ENCODE measurements at regions of chr11 and their contacts with region 1.

Region 1: GRCh38 chr11:95231127-95231880 is at the start of gene SESN3:
- DNase-seq: peak; percentile 99
- ATAC-seq: peak; percentile 93
- H3K4me3 Mint-ChIP-seq: no peak within 1 kb of the TSS
- H3K27ac Mint-ChIP-seq: peak within 1 kb of the TSS; percentile 84
- H3K4me1 Mint-ChIP-seq: peaks cover 46% of the 10 kb centered on the region
- H3K27me3 Mint-ChIP-seq: no peaks in the 10 kb centered on the region
- total RNA-seq, gene SESN3: 8.4 to 12.3 TPM

Region 2: DNA sequence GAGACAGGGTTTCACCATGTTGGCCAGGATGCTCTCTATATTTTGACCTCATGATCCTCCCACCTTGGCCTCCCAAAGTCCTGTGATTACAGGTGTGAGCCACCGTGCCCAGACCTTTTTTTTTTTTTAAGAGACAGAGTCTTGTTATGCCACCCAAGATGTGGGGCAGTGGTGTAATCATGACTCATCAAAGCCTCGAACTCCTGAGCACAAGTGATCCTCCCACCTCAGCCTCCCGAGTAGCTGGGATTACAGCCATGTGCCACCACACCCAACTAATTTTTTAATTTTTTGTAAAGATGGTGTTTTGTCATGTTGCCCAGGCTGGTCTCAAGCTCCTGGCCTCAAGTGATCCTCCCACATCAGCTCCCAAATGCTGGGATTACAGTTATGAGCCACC is 889.1 kb before region 1 on chr11:
- CTCF ChIA-PET with region 1: no interaction called
- POLR2A ChIA-PET with region 1: no interaction called
- intact Hi-C with region 1: no loop called
- DNase-seq: no peak
- ATAC-seq: no peak
- H3K4me3 Mint-ChIP-seq: no peak overlapping the region
- H3K27ac Mint-ChIP-seq: no peak overlapping the region
- H3K4me1 Mint-ChIP-seq: no peaks in the 10 kb centered on the region
- H3K27me3 Mint-ChIP-seq: peaks cover under 1% of the 10 kb centered on the region

Region 3: GRCh38 chr11:94910779-94911178 is 320.5 kb before region 1 on chr11:
- CTCF ChIA-PET with region 1: no interaction called
- POLR2A ChIA-PET with region 1: no interaction called
- intact Hi-C with region 1: no loop called
- DNase-seq: no peak
- ATAC-seq: no peak
- H3K4me3 Mint-ChIP-seq: no peak overlapping the region
- H3K27ac Mint-ChIP-seq: no peak overlapping the region
- H3K4me1 Mint-ChIP-seq: no peaks in the 10 kb centered on the region
- H3K27me3 Mint-ChIP-seq: no peaks in the 10 kb centered on the region

Region 4: GRCh38 chr11:94973099-94973968 is 258.0 kb before region 1 on chr11 and contains the starts of genes CWC15 and KDM4D:
- CTCF ChIA-PET with region 1: interaction called, 3 read pairs
- POLR2A ChIA-PET with region 1: interaction called, 3 read pairs
- intact Hi-C with region 1: loop called in 1 of 2 experiments (anchors 2 kb)
- DNase-seq: peak; percentile 97
- ATAC-seq: peak; percentile 99
- H3K4me3 Mint-ChIP-seq: peak within 1 kb of the TSS; percentile 84
- H3K27ac Mint-ChIP-seq: peak within 1 kb of the TSS; percentile 94
- H3K4me1 Mint-ChIP-seq: peaks cover 27% of the 10 kb centered on the region
- H3K27me3 Mint-ChIP-seq: no peaks in the 10 kb centered on the region
- total RNA-seq, gene CWC15: 74.7 to 85.0 TPM
- total RNA-seq, gene KDM4D: 1.5 to 1.8 TPM

Region 5: GRCh38 chr11:95156916-95157541 is 74.3 kb before region 1 on chr11:
- CTCF ChIA-PET with region 1: interaction called, 15 read pairs
- POLR2A ChIA-PET with region 1: interaction called, 4 read pairs
- intact Hi-C with region 1: loop called in 1 of 2 experiments (anchors 2 kb)
- DNase-seq: no peak
- ATAC-seq: no peak
- H3K4me3 Mint-ChIP-seq: no peak overlapping the region
- H3K27ac Mint-ChIP-seq: no peak overlapping the region
- H3K4me1 Mint-ChIP-seq: peaks cover 39% of the 10 kb centered on the region
- H3K27me3 Mint-ChIP-seq: no peaks in the 10 kb centered on the region

Region 6: GRCh38 chr11:95337175-95337957 is 106.1 kb after region 1 on chr11:
- CTCF ChIA-PET with region 1: no interaction called
- POLR2A ChIA-PET with region 1: no interaction called
- intact Hi-C with region 1: loop called in 1 of 2 experiments (anchors 2 kb)
- DNase-seq: peak; percentile 63
- ATAC-seq: peak; percentile 74
- H3K4me3 Mint-ChIP-seq: no peak overlapping the region
- H3K27ac Mint-ChIP-seq: no peak overlapping the region
- H3K4me1 Mint-ChIP-seq: peaks cover 1% of the 10 kb centered on the region
- H3K27me3 Mint-ChIP-seq: no peaks in the 10 kb centered on the region

Region 7: GRCh38 chr11:95404330-95404729 is 173.0 kb after region 1 on chr11:
- CTCF ChIA-PET with region 1: no interaction called
- POLR2A ChIA-PET with region 1: no interaction called
- intact Hi-C with region 1: no loop called
- DNase-seq: no peak
- ATAC-seq: no peak
- H3K4me3 Mint-ChIP-seq: no peak overlapping the region
- H3K27ac Mint-ChIP-seq: no peak overlapping the region
- H3K4me1 Mint-ChIP-seq: no peaks in the 10 kb centered on the region
- H3K27me3 Mint-ChIP-seq: no peaks in the 10 kb centered on the region

Region 8: DNA sequence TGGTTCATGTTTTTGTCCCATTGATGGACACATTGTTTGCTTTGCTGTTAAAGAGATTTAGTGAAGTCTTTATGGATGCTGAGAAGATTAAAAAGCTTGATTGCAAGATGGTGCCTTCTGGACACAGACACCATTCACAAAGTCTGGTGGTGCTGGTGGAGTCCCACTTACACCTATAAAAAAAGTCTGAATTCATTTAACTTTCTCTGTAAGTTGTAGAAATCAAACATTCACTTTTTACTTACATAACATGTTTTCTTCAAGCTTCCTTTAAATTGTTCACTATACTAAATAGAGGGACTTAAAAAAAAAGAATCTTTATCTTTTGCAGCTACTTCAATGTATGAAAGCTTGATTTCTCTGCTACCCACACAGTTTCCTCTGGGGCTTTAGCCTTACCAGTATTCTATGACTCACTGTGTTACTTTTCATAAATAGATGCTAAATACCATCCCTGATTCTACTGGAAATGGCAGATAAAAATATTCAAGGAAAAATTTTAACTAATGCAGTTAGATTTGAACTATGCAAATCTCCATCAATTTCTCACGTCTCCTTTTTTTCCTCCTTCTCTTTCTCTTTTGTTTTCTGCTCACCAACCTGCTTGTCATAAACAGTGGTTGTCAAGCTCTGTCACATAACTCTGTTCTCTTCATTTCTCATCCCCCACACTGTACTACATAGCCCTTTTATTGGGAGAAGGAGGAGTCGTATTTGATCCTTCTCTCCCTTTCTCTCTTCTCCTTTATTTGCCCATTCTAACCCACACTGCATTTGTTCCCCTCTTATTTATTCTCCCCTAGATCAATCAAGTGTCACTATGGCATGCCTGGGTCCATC is 468.5 kb after region 1 on chr11:
- CTCF ChIA-PET with region 1: interaction called, 17 read pairs
- POLR2A ChIA-PET with region 1: interaction called, 3 read pairs
- intact Hi-C with region 1: loop called (anchors 1 to 2 kb)
- DNase-seq: peak; percentile 25
- ATAC-seq: peak; percentile 54
- H3K4me3 Mint-ChIP-seq: peak overlapping the region; percentile 55
- H3K27ac Mint-ChIP-seq: peak overlapping the region; percentile 95
- H3K4me1 Mint-ChIP-seq: peaks cover 58% of the 10 kb centered on the region
- H3K27me3 Mint-ChIP-seq: no peaks in the 10 kb centered on the region

Region 9: GRCh38 chr11:96012086-96012824 is 781.0 kb after region 1 on chr11:
- CTCF ChIA-PET with region 1: no interaction called
- POLR2A ChIA-PET with region 1: no interaction called
- intact Hi-C with region 1: loop called in 1 of 2 experiments (anchors 5 kb)
- DNase-seq: peak; percentile 66
- ATAC-seq: peak; percentile 71
- H3K4me3 Mint-ChIP-seq: peak overlapping the region; percentile 53
- H3K27ac Mint-ChIP-seq: peak overlapping the region; percentile 85
- H3K4me1 Mint-ChIP-seq: peaks cover 63% of the 10 kb centered on the region
- H3K27me3 Mint-ChIP-seq: no peaks in the 10 kb centered on the region